ENCODE measurements at regions of chr13 and their contacts with region 1.

Region 1: GRCh38 chr13:19863323-19864023 is at the start of gene ZMYM5:
- DNase-seq: peak; percentile 98
- ATAC-seq: peak; percentile 90
- H3K4me3 Mint-ChIP-seq: peak within 1 kb of the TSS; percentile 94
- H3K27ac Mint-ChIP-seq: peak within 1 kb of the TSS; percentile 97
- H3K4me1 Mint-ChIP-seq: peaks cover 41% of the 10 kb centered on the region
- H3K27me3 Mint-ChIP-seq: no peaks in the 10 kb centered on the region
- total RNA-seq, gene ZMYM5: 9.1 to 10.1 TPM

Region 2: DNA sequence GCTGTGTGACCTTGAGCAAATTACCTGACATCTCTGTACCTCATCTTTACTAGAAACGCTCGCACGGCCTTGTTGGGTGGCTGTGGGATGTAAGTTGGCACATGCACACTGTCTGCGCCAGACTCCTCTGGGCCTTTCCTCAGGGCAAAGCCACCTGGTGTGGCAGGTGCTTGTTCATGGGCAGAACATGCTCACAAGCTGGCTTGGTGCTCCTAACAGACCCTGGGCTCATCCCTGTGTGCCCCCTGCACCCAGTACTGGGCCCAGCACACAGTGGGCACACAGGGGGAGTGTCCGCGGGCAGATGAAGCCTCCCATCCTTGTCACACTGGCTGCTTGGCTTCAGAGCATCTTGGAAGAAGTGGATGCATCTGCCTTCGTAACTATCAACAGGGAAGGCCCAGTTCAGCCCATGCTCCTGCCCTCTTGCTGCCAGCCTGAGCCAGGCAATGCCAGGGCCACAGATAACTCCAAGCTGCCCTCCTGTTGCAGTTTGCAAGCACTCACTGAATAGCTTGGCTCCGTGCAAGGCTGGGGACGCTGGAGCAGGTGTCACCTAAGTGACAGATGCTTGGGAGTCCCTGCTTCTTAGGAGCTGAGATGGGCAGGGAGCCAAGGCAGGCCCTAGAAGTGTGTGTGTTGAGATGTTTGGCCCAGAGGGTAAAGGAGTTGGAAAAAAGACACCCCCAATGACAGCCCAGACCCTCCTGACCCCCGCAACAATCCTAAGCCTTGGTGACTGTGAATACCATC is 805.7 kb before region 1 on chr13:
- CTCF ChIA-PET with region 1: no interaction called
- POLR2A ChIA-PET with region 1: no interaction called
- intact Hi-C with region 1: no loop called
- DNase-seq: no peak
- ATAC-seq: no peak
- H3K4me3 Mint-ChIP-seq: no peak overlapping the region
- H3K27ac Mint-ChIP-seq: no peak overlapping the region
- H3K4me1 Mint-ChIP-seq: no peaks in the 10 kb centered on the region
- H3K27me3 Mint-ChIP-seq: no peaks in the 10 kb centered on the region

Region 3: GRCh38 chr13:19633479-19634255 is 229.8 kb before region 1 on chr13 and contains the start of gene MPHOSPH8:
- CTCF ChIA-PET with region 1: no interaction called
- POLR2A ChIA-PET with region 1: no interaction called
- intact Hi-C with region 1: loop called in 1 of 2 experiments (anchors 1 kb)
- DNase-seq: peak; percentile 96
- ATAC-seq: peak; percentile 98
- H3K4me3 Mint-ChIP-seq: peak within 1 kb of the TSS; percentile 99
- H3K27ac Mint-ChIP-seq: peak within 1 kb of the TSS; percentile 99
- H3K4me1 Mint-ChIP-seq: peaks cover 27% of the 10 kb centered on the region
- H3K27me3 Mint-ChIP-seq: no peaks in the 10 kb centered on the region
- total RNA-seq, gene MPHOSPH8: 39.1 to 39.8 TPM

Region 4: DNA sequence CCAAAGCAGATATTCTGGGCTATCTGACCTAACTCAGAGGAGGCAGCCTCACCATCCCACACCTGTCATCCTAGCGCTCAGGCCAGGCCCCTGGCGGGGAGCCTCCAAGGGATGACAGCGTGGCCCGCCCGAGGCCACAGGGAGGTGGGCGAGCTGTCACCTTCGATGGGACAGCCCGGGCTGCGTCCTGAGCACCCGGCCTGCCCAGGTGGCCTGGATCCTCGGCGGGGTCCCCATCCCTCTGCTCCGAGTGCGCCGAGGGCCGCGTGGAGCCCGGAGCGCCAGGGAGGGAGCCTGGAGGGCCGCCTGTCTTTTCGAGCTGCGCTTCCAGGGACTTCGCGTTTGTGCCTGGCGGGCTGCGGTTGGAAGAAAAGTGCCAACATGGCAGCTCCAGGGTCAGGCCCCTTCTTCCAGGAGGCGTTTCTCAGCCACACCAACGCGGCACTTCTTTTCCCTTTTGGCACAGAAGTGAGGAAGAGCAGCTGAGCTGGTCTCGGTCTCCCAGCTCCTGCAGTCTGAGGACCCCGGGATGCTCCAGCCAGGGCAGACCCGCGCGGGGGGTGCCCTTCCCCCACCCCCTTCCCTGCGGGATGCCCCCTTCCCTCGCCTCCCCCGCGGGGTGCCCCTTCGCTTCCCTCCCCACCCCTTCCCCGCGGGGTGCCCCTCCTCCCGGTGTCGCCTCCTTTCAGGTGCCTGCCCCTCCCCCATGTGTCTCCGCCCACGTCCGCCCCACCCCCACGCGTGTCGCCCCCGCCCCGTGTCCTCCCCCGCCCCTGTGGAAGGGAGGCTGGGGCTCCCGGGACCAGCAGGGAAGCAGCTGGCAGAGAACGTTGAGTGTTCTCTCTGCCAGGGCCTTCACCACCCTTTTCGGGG is 255.0 kb after region 1 on chr13:
- CTCF ChIA-PET with region 1: no interaction called
- POLR2A ChIA-PET with region 1: interaction called, 3 read pairs
- intact Hi-C with region 1: loop called in 1 of 2 experiments (anchors 5 kb)
- DNase-seq: peak; percentile 49
- ATAC-seq: peak; percentile 3
- H3K4me3 Mint-ChIP-seq: peak overlapping the region; percentile 79
- H3K27ac Mint-ChIP-seq: peak overlapping the region; percentile 80
- H3K4me1 Mint-ChIP-seq: peaks cover 18% of the 10 kb centered on the region
- H3K27me3 Mint-ChIP-seq: no peaks in the 10 kb centered on the region

Region 5: DNA sequence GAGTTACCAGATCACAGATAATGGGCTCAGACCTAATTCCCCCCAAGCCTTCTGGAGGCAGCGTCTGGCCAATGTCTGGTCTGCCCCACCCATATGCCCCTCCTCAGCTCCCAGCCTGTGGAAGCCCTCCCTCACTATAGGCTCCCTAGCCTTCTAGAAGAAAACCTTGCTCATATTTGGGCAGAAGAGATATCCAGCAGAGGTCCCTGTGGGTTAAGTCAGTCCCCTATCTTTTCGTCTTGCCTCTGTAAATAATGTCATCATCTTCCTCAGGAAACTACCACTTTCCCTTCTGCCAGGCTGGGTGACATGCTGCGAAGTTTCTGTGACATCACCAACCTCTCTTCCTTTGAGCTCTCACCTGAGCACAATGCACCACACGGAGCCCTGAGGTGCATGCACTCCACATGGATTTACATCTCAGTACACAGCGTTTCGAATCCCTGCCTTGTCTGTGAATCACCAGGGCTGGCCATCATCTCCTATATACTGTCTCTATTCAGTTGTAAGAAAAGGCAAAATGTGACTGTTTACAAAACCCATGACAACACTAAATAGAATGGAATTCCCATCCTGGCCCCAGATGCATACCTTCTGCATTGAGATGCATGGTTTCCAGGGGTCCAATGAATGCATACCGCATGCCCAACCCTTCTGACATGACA is 549.4 kb after region 1 on chr13:
- CTCF ChIA-PET with region 1: no interaction called
- POLR2A ChIA-PET with region 1: no interaction called
- intact Hi-C with region 1: loop called in 1 of 2 experiments (anchors 5 kb)
- DNase-seq: peak; percentile 59
- ATAC-seq: peak; percentile 69
- H3K4me3 Mint-ChIP-seq: no peak overlapping the region
- H3K27ac Mint-ChIP-seq: peak overlapping the region; percentile 77
- H3K4me1 Mint-ChIP-seq: peaks cover 22% of the 10 kb centered on the region
- H3K27me3 Mint-ChIP-seq: peaks cover 3% of the 10 kb centered on the region

Region 6: DNA sequence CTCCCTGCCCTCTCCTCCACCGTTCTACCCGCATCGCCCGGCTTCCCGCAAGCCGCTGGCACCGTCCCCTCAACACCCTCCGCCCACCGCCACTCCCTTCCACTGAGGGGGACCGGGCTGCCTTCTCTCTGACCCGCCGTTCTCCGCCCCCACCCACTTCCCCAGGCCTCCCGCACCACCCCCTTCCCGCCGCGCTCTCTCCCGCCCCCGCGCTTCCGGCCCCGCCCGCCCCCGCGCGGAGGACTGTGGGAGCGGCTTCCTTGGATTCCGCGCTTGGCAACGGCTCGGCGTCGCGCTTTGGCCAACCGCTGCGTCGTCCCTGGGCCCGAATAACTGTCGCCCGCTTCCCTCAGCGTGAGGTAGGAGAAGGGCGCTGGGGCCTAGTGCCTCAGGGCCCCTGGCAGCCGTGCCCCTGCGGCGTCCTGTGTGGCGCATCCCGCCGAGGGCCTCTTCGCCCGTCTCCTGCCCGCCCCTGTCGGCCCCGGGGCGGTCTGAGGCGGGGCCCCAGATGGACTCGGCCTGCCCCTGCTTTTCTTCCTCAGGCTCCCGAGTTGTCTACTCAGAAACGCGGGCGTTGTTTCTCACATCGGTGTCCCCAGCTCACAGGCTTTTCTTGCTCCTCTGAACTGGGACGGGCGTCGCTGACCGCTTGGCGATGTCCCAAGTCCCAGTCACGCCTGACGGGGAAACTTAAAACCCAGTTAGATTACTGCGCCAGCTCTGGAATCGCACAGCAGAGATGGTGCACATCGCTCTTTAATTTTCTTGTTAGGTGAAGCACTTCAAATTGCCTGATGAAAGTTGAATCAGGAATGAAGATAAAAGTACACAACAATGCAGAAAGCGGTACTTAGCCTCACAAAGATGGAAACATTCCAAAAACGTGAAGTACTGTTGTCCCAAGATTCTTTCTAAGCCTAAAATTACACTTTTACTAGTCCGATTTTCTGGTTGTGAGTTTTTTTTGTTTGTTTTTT is 703.7 kb after region 1 on chr13 and contains the start of gene IFT88:
- CTCF ChIA-PET with region 1: no interaction called
- POLR2A ChIA-PET with region 1: no interaction called
- intact Hi-C with region 1: loop called in 1 of 2 experiments (anchors 2 kb)
- DNase-seq: peak; percentile 89
- ATAC-seq: peak; percentile 83
- H3K4me3 Mint-ChIP-seq: peak within 1 kb of the TSS; percentile 81
- H3K27ac Mint-ChIP-seq: peak within 1 kb of the TSS; percentile 80
- H3K4me1 Mint-ChIP-seq: peaks cover 19% of the 10 kb centered on the region
- H3K27me3 Mint-ChIP-seq: no peaks in the 10 kb centered on the region
- total RNA-seq, gene IFT88: 4.7 to 4.8 TPM

Measured in activated CD4-positive, alpha-beta T cell treated with anti-CD3 and anti-CD28 coated beads for 36 hours (primary cell).